ENCODE measurements at regions of chr9 and their contacts with region 1.

Region 1: DNA sequence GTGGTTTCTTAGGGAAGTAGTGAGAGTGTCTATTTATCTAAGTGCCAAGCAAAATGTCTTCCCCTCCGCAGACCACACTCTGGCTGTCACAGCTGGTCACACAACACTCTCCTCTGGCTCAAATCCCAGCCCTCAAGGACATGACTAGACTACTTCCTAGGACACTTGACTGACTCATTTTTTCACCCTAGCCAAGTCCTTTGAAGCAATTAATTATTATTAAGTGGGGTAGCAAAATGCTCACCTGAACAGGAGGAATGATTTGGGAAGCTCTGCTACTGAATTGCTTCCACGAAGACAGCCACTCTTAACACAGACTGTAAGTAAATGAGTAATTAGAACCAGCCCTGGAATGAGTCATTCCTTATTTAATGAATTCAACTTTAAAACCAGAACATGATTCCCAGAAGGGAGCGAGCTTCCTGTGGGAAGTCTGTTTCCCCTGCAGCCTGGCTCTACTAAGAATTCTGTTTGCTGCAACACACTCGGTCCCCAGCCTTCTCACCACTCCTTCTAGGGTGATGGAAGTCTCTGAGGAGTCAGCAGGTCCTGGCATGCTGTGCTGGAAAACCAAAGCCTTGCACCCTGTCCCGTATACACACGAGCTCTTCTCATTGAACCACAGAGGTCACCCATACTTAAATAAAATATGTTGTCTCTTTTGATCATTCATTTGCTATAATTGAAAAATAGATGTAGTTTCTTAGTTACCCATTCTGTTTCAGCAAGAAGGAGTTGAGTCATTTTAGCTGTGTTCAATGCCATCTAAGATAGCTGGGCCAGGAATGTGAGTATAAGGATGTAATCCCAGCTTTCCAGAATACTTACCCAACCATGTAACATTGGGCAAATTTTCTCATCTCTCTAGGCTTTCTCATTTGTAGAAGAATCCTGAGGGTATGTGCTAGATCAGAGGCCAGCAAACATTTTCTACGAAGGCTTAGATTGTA is 218.6 kb upstream of the RASEF start:
- DNase-seq: peak; percentile 82
- H3K4me3 ChIP-seq: peak overlapping the region in 1 of 3 experiments; percentile 14
- H3K27ac ChIP-seq: peak overlapping the region; percentile 77
- H3K4me1 ChIP-seq: peaks cover 25% of the 10 kb centered on the region
- H3K27me3 ChIP-seq: no peaks in the 10 kb centered on the region
- CTCF ChIP-seq: no peak
- POLR2A ChIP-seq: no peak

Region 2: GRCh38 chr9:83081010-83081690 is 200.4 kb before region 1 on chr9:
- CTCF ChIA-PET with region 1: no interaction called
- POLR2A ChIA-PET with region 1: no interaction called
- dilution Hi-C with region 1: no loop called
- intact Hi-C with region 1: no loop called
- DNase-seq: no peak
- H3K4me3 ChIP-seq: no peak overlapping the region
- H3K27ac ChIP-seq: no peak overlapping the region
- H3K4me1 ChIP-seq: no peaks in the 10 kb centered on the region
- H3K27me3 ChIP-seq: no peaks in the 10 kb centered on the region
- CTCF ChIP-seq: no peak
- POLR2A ChIP-seq: no peak

Region 3: DNA sequence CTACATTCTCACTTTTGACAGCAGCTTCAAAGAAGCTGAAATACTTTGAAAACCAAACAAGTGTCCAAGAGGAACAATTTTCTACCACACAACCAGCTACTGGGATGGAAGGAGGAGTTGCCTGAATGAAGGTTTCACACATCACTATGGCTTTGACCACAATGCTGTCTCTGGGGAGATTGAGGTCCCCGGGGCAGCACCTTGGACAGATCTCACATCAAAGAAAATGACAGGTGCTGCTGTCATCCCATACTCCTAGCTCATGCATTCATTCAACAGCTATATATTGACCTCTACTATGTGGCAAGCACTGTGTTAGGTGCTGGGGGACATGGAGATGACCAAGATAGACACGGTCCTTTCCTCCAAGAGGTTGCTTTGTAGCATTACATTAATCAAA is 14.5 kb after region 1 on chr9:
- CTCF ChIA-PET with region 1: interaction called, 7 read pairs
- POLR2A ChIA-PET with region 1: no interaction called
- dilution Hi-C with region 1: no loop called
- intact Hi-C with region 1: loop called (anchors 1 kb)
- DNase-seq: no peak
- H3K4me3 ChIP-seq: no peak overlapping the region
- H3K27ac ChIP-seq: no peak overlapping the region
- H3K4me1 ChIP-seq: peaks cover 15% of the 10 kb centered on the region
- H3K27me3 ChIP-seq: no peaks in the 10 kb centered on the region
- CTCF ChIP-seq: no peak
- POLR2A ChIP-seq: no peak

Region 4: DNA sequence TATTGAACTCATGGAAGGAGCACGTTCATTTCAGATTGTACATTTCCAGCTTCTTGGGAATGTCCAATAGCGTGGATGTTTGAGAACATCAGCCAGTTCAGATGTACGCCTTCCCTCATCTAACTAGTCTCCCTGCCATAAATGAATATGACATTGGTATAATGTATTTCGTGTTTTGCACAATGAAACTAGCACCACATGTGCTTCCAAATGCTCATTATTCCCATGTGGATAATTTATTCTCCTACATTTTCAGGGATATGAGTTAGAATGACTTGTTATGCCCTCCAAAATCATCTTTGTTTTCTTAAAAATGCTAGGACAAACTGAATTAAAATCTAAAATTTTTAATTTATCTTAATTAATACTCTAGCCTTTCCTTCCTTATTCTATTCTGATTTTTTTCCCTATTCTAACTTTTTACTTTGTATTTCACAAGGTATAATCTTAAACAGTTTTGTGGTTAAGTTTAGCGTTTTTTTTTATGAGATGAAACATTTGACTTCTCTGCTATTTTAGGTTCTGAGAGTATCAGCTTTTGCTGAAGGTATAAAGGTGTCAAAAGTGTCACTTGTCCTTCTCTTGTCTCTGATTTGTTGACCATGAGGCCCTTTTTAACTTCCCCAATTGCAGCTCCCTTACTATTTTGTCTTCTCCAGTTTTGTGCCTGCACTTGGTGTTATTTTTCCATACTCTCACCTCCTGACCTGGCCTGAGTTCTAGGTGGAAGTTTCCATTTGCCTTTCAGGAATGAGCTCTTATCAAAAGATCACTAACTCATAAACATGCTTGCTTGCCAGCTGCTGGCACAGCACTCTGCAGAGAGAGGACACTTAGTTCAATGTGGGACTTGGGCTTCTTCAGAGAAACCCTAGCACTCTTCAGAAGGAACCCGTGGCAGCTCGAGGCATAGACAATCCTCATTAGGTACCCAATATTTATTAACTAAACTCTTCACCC is 149.8 kb after region 1 on chr9:
- CTCF ChIA-PET with region 1: no interaction called
- POLR2A ChIA-PET with region 1: no interaction called
- dilution Hi-C with region 1: no loop called
- intact Hi-C with region 1: no loop called
- DNase-seq: peak; percentile 59
- H3K4me3 ChIP-seq: no peak overlapping the region
- H3K27ac ChIP-seq: no peak overlapping the region
- H3K4me1 ChIP-seq: peaks cover 10% of the 10 kb centered on the region
- H3K27me3 ChIP-seq: no peaks in the 10 kb centered on the region
- CTCF ChIP-seq: no peak
- POLR2A ChIP-seq: no peak

Measured in endothelial cell of umbilical vein (primary cell).